ENCODE measurements at regions of chr19 and their contacts with region 1.

Region 1: DNA sequence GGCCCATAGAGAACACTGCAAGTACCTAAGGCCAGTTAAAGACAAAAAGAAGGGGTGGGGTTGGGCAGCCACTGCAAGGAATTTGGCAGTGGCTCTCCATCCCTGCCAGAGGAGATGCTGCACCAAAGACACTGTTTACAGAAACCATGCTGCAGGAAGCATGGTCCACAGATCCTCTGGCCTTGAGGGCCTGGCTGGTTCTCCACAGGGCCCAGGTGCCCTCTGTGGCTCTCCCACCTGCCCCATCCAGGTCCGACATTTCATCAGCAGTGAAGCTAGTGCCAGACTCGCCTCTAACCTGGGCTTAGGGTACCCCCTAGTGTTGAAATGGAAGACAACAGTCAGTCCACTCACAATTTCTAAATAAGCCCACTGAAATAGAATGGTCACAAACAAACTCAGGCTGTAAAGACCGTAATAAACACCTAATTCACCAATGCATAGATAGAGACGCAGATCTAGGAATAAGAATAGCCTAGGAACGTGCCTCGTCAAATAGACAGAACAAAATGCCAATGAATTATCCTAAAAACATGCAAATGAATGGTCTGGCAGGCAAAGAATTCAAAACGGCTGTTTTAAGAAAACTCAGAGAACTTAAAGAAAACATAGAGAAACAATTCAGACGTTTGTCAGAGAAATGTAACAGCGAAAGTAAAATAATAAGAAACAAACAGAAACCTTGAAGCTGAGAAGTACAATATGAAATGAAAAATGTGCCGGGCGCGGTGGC is 23.3 kb downstream of the LYPD4 start:
- DNase-seq: peak; percentile 82 to 94
- ATAC-seq: peak; percentile 92 to 96
- H3K4me3 ChIP-seq: no peak overlapping the region
- H3K27ac ChIP-seq: no peak overlapping the region
- H3K4me1 ChIP-seq: no peaks in the 10 kb centered on the region
- CTCF ChIP-seq: peak; percentile 91
- EP300 ChIP-seq: no peak
- POLR2A ChIP-seq: no peak
- RAD21 ChIP-seq: peak; percentile 86 to 96

Region 2: DNA sequence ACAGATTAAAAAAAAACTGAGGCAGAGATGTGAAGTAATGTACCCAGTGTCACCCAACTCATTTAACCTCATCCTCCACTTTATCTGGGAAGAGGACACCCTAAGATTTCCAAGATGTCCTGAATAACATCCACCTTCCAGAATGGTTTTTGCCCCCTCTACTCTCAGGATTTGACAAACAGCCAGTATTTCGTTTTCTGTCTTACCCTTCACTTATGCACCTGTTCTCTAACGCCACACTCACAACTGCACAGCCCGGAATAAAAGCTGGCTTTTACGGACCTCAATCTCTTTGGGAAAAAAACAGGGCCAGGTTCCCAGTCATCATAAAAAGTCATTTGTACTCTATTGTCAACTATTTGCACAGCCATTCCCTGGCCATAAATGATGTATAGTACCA is 87.0 kb before region 1 on chr19:
- CTCF ChIA-PET with region 1: no interaction called
- POLR2A ChIA-PET with region 1: no interaction called
- DNase-seq: no peak
- ATAC-seq: no peak
- H3K4me3 ChIP-seq: no peak overlapping the region
- H3K27ac ChIP-seq: no peak overlapping the region
- H3K4me1 ChIP-seq: no peaks in the 10 kb centered on the region
- CTCF ChIP-seq: no peak
- EP300 ChIP-seq: no peak
- POLR2A ChIP-seq: no peak
- RAD21 ChIP-seq: no peak

Region 3: GRCh38 chr19:41767115-41767514 is 54.1 kb before region 1 on chr19:
- CTCF ChIA-PET with region 1: interaction called, 11 read pairs
- POLR2A ChIA-PET with region 1: no interaction called
- DNase-seq: no peak
- ATAC-seq: no peak
- H3K4me3 ChIP-seq: no peak overlapping the region
- H3K27ac ChIP-seq: no peak overlapping the region
- H3K4me1 ChIP-seq: no peaks in the 10 kb centered on the region
- CTCF ChIP-seq: no peak
- EP300 ChIP-seq: no peak
- POLR2A ChIP-seq: no peak
- RAD21 ChIP-seq: no peak

Region 4: DNA sequence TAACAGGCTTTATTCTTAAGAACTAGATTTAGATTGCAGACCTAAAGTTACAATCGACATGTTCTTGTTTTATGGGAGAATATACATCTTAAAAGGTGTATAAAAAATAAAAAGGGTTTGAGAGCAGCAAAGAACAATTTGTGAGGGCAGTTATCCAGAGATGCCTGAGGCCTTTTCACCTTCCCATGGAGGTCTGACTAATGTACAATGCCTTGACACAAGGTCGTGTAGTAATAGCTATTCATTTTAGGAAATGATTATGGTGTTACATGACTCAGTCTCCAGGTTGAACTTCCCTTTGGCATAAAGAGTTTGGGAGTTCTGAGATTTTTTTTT is 45.8 kb before region 1 on chr19:
- CTCF ChIA-PET with region 1: interaction called, 16 read pairs
- POLR2A ChIA-PET with region 1: interaction called, 3 read pairs
- DNase-seq: peak in 1 of 2 experiments; percentile 50
- ATAC-seq: no peak
- H3K4me3 ChIP-seq: no peak overlapping the region
- H3K27ac ChIP-seq: no peak overlapping the region
- H3K4me1 ChIP-seq: peaks cover 5% of the 10 kb centered on the region; the same call in 2 of the 3 replicates
- CTCF ChIP-seq: no peak
- EP300 ChIP-seq: no peak
- POLR2A ChIP-seq: no peak
- RAD21 ChIP-seq: no peak

Region 5: DNA sequence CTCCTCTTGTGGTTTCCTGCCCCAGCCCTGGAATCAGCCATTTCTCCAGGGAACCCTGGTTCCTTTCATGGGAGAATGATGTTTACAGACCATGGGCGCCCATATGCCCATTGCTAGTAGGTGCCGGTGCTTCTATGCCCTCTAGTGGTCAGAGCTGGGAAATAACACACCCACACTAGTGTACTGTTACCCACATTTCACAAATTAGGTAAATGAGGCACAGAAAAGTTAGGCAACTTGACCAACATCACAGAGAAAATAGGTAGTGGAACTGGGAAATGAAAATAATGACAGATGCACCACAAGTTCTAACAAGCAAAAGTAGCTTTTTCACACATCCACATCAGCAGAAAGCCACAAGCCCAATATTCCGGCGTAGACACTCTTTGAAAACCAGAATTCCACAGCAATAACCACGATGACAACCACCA is 26.1 kb before region 1 on chr19:
- CTCF ChIA-PET with region 1: interaction called, 428 read pairs
- POLR2A ChIA-PET with region 1: no interaction called
- DNase-seq: peak; percentile 49 to 70
- ATAC-seq: peak; percentile 61 to 89
- H3K4me3 ChIP-seq: no peak overlapping the region
- H3K27ac ChIP-seq: no peak overlapping the region
- H3K4me1 ChIP-seq: 0 out of 3 replicates have a peak, but pooled peaks cover 11% of the 10 kb centered on the region
- CTCF ChIP-seq: peak; percentile 96
- EP300 ChIP-seq: no peak
- POLR2A ChIP-seq: no peak
- RAD21 ChIP-seq: peak; percentile 32 to 47; a peak in 4 of 5 replicates

Region 6: GRCh38 chr19:41811036-41811435 is 10.1 kb before region 1 on chr19:
- CTCF ChIA-PET with region 1: interaction called, 428 read pairs
- POLR2A ChIA-PET with region 1: no interaction called
- DNase-seq: no peak
- ATAC-seq: no peak
- H3K4me3 ChIP-seq: no peak overlapping the region
- H3K27ac ChIP-seq: no peak overlapping the region
- H3K4me1 ChIP-seq: no peaks in the 10 kb centered on the region
- CTCF ChIP-seq: no peak
- EP300 ChIP-seq: no peak
- POLR2A ChIP-seq: no peak
- RAD21 ChIP-seq: no peak

Region 7: GRCh38 chr19:41837981-41838708 is 17.0 kb after region 1 on chr19:
- CTCF ChIA-PET with region 1: interaction called, 161 read pairs
- POLR2A ChIA-PET with region 1: no interaction called
- DNase-seq: no peak
- ATAC-seq: peak; percentile 7 to 20; a peak in 4 of 6 replicates
- H3K4me3 ChIP-seq: no peak overlapping the region
- H3K27ac ChIP-seq: no peak overlapping the region
- H3K4me1 ChIP-seq: no peaks in the 10 kb centered on the region
- CTCF ChIP-seq: no peak
- EP300 ChIP-seq: no peak
- POLR2A ChIP-seq: no peak
- RAD21 ChIP-seq: no peak

Region 8: DNA sequence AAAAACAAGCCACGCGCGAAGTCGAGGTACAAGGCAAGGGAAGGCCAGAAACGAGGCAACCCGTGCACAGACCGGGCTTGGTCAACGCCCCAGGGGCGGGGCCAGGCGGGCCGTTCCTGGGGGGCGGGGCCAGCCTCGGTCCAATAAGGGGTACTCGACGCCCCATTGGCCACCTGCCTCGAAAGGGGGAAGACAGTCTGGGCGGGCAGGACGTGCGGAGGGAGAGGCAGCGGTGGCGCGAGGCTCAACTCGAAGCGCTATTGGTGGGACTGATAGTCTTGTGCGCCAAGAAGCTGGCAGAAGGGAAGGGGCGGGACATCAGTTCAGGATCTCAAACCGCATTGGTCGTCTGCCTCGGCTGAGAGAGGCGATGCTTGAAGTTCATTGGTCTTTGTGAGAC is 23.4 kb after region 1 on chr19 and contains the start of gene LYPD4:
- CTCF ChIA-PET with region 1: interaction called, 161 read pairs
- POLR2A ChIA-PET with region 1: no interaction called
- DNase-seq: peak in 1 of 2 experiments; percentile 58
- ATAC-seq: peak; percentile 20 to 68; a peak in 4 of 6 replicates
- H3K4me3 ChIP-seq: no peak within 1 kb of the TSS
- H3K27ac ChIP-seq: no peak within 1 kb of the TSS
- H3K4me1 ChIP-seq: no peaks in the 10 kb centered on the region
- CTCF ChIP-seq: no peak
- EP300 ChIP-seq: no peak
- POLR2A ChIP-seq: no peak
- RAD21 ChIP-seq: no peak
- polyA plus RNA-seq, gene LYPD4: not detected in 2 replicates